ENCODE measurements at regions of chr10 and their contacts with region 1.

Region 1: GRCh38 chr10:94320285-94320914 is 42.3 kb downstream of the NOC3L start:
- DNase-seq: peak; percentile 72
- ATAC-seq: peak; percentile 72
- H3K4me3 Mint-ChIP-seq: no peak overlapping the region
- H3K27ac Mint-ChIP-seq: no peak overlapping the region
- H3K4me1 Mint-ChIP-seq: no peaks in the 10 kb centered on the region
- H3K27me3 Mint-ChIP-seq: no peaks in the 10 kb centered on the region
- CTCF ChIP-seq: peak; percentile 70

Region 2: DNA sequence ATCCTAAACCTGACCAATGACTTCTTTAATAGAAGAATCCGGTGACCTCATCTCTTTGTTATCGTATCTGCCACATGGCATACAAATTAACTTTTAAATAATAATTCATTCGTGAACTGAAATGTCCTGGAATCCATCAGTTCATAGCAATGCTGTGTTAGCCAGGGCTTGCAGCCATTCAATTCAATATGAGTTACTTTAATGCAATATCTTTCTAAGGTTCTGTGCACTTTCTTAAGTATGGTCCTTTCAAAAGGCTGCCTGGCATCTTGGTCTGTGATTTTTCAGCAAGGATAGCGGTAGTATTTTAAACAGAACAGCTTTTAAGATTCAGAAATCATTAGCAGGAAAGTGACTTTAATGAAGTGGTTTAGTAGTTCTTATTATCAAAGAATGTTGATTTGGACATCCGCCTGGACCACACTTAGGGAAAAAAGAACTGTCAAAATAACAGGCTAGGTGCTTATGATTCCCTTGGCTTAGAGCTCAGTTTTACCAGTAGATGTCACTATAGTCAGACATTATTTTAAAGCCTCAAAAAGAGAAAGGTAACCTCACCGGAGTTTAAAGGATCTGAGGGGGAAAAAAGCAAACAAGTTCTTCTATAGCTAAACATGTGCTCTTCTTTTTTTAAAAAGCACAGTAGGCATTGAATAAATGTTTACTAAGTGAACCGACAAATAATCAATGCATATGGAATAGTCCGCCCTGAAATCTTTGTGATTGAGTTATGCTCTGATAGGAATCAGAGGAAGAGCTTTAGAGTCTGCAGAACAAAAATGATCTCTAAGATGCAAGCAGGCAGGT is 403.9 kb before region 1 on chr10:
- CTCF ChIA-PET with region 1: interaction called, 39 read pairs
- POLR2A ChIA-PET with region 1: no interaction called
- DNase-seq: no peak
- ATAC-seq: peak; percentile 61
- H3K4me3 Mint-ChIP-seq: peak overlapping the region; percentile 41
- H3K27ac Mint-ChIP-seq: no peak overlapping the region
- H3K4me1 Mint-ChIP-seq: peaks cover 11% of the 10 kb centered on the region
- H3K27me3 Mint-ChIP-seq: no peaks in the 10 kb centered on the region
- CTCF ChIP-seq: no peak

Region 3: DNA sequence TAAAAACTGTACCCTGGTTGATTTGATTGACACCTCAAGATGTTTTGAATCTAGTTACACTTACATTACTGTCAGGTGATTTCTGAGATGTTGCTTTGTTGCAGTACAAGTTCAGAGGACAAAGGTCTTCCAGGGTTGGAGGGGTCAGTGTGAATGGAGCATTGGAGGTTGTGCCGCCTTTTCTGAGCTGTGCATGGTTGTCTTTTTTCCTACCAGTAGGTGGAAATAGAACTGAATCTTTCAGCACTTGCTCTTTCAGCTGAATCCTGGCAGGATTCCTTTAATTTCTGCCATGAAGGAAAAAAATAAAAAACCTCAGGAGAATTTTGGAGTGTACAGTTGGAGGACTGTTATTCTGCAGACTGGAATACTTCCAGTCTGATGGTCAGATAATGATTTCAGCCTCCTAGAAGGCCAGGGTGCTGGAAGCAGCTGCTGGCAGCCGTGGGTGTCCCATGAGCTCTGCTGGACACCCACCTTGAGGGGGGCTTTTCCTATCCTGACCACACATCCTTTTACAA is 244.0 kb before region 1 on chr10:
- CTCF ChIA-PET with region 1: interaction called, 11 read pairs
- POLR2A ChIA-PET with region 1: no interaction called
- DNase-seq: no peak
- ATAC-seq: peak; percentile 53; the same call in 1 of the 2 replicates
- H3K4me3 Mint-ChIP-seq: no peak overlapping the region
- H3K27ac Mint-ChIP-seq: no peak overlapping the region
- H3K4me1 Mint-ChIP-seq: 0 out of 2 replicates have a peak, but pooled peaks cover 3% of the 10 kb centered on the region
- H3K27me3 Mint-ChIP-seq: no peaks in the 10 kb centered on the region
- CTCF ChIP-seq: no peak

Region 4: DNA sequence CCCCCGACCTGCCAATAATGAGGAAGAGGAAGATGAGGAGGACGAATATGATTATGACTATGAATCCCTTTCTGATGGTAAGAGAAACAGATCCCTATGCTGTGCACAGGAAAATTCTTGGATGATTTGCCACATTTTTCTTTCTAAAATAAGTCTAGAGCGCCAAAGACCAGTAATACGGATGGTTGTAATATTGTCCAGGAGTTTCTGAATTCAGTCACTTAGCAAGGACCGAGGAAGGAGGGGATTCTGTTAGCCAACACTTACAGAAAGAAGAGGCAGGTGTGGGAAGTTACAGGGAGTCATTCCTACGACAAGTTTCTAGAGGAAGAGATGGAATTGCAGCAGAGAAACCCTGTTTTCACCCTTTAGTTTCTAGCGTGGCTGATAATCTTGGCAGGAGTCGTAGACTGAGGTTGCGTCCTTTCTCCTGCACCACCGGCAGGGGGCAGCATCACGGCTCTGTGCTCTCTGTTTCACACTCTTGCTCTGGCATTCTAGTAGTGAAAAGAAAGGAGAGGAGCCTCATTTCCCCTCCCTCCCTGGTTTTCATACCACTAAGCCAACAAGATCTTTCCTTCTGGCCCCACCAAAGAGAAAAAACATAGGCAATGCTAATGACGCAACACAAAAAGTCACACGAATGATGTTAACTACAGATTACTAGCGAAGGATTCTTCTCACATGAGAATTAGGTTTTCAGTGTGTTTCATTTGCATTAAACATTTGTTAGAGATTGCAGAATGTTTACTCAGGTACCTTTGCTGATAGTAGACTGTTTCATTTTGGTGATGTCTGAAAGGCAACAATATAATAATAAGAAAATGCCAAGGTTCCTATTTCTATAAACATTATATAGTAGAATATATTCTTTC is 40.3 kb before region 1 on chr10:
- CTCF ChIA-PET with region 1: interaction called, 11 read pairs
- POLR2A ChIA-PET with region 1: no interaction called
- DNase-seq: peak; percentile 77
- ATAC-seq: peak; percentile 99
- H3K4me3 Mint-ChIP-seq: no peak overlapping the region
- H3K27ac Mint-ChIP-seq: no peak overlapping the region
- H3K4me1 Mint-ChIP-seq: peaks cover 3% of the 10 kb centered on the region
- H3K27me3 Mint-ChIP-seq: no peaks in the 10 kb centered on the region
- CTCF ChIP-seq: peak; percentile 88

Region 5: GRCh38 chr10:94292434-94293090 is 27.8 kb before region 1 on chr10:
- CTCF ChIA-PET with region 1: interaction called, 15 read pairs
- POLR2A ChIA-PET with region 1: interaction called, 5 read pairs
- DNase-seq: no peak
- ATAC-seq: no peak
- H3K4me3 Mint-ChIP-seq: no peak overlapping the region
- H3K27ac Mint-ChIP-seq: no peak overlapping the region
- H3K4me1 Mint-ChIP-seq: peaks cover 19% of the 10 kb centered on the region
- H3K27me3 Mint-ChIP-seq: no peaks in the 10 kb centered on the region; the same call in 1 of the 2 replicates
- CTCF ChIP-seq: no peak

Region 6: DNA sequence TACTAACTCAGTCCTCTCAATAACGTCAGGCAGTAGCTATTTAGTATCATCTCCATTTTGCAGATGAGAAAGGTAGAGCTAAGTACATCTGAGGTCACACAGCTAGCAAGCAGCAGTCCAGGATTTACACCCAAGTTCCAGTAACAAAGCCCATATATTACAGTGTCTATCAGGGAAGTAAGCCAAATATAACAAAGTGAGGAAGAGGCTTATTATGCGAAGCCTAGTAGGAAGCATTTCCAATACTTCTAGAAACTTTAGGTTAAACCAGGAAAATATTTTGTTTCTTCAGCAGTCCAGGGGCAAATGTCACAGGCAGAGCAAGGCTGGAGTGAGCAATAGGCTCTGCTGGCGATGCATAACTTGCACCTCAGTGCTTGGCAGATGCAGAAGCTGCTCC is 11.5 kb before region 1 on chr10:
- CTCF ChIA-PET with region 1: interaction called, 15 read pairs
- POLR2A ChIA-PET with region 1: no interaction called
- DNase-seq: no peak
- ATAC-seq: no peak
- H3K4me3 Mint-ChIP-seq: no peak overlapping the region
- H3K27ac Mint-ChIP-seq: no peak overlapping the region
- H3K4me1 Mint-ChIP-seq: no peaks in the 10 kb centered on the region
- H3K27me3 Mint-ChIP-seq: 0 out of 2 replicates have a peak, but pooled peaks cover 5% of the 10 kb centered on the region
- CTCF ChIP-seq: no peak